Endothelial cell of umbilical vein (primary cell): ENCODE measurements at regions of chr15 and their contacts with region 1.

Region 1: GRCh38 chr15:79028411-79028964 is 62.1 kb downstream of the RASGRF1 start:
- DNase-seq: peak; percentile 31
- H3K4me3 ChIP-seq: no peak overlapping the region
- H3K27ac ChIP-seq: no peak overlapping the region
- H3K4me1 ChIP-seq: no peaks in the 10 kb centered on the region
- H3K27me3 ChIP-seq: no peaks in the 10 kb centered on the region
- CTCF ChIP-seq: peak; percentile 78 to 80
- POLR2A ChIP-seq: no peak

Region 2: DNA sequence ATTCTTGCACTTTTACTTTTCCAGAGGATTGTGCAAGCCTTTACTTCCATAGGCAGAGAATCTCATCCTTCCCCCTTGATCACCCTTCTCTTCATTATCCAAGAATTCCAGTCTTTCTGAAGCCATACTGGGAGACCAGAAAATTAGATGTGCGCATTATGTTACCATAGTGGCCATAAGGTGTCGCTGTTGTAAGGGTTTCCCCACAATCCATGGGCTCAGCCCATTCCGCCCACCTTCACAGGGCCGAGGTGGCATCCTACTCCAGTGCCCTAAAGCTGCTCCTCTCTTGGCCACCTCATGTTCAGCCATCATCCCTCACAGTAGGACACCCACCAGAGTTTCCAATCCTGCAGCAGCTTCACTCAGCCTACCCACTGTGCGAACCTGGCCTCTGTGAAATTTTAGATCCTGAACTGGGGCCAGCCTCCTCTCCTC is 118.7 kb before region 1 on chr15:
- CTCF ChIA-PET with region 1: interaction called, 13 read pairs
- POLR2A ChIA-PET with region 1: no interaction called
- dilution Hi-C with region 1: no loop called
- intact Hi-C with region 1: no loop called
- DNase-seq: peak; percentile 52
- H3K4me3 ChIP-seq: no peak overlapping the region
- H3K27ac ChIP-seq: no peak overlapping the region
- H3K4me1 ChIP-seq: no peaks in the 10 kb centered on the region
- H3K27me3 ChIP-seq: no peaks in the 10 kb centered on the region
- CTCF ChIP-seq: peak; percentile 61 to 65
- POLR2A ChIP-seq: no peak

Region 3: DNA sequence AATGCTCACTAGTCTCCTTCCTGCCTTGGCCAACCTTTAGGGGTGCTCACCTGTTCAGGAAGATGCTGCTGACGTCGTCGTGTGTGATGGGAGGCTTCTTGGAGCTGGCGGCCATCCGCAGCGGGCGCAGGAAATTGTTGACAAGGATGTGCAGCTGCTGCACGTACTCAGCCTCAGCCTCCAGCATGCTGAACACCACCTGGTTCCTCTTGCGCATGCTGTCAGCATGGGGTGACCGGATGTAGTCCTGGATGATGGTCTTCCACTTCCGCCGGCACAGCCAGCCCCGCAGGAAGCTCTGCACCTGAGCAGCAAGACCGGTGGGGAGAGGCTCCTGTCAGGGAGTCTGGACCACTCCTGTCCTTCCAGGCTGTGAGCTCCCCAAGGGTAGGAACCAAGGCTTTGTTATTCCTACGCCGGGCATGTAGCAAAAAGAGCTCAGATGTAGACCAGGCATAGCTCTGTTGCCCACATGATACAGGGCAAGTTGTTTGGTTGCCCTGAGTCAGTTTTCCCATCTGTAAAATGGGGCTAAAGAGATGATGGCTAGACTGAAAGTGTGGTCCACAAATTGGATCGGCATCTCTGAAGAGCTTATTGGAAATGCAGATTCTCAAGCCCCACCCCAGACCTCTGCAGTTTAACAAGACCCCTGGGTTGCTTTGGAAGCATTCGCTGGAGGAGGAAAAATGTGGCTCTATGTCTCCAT is 18.4 kb after region 1 on chr15:
- CTCF ChIA-PET with region 1: interaction called, 13 read pairs
- POLR2A ChIA-PET with region 1: no interaction called
- dilution Hi-C with region 1: no loop called
- intact Hi-C with region 1: no loop called
- DNase-seq: no peak
- H3K4me3 ChIP-seq: no peak overlapping the region
- H3K27ac ChIP-seq: no peak overlapping the region
- H3K4me1 ChIP-seq: no peaks in the 10 kb centered on the region
- H3K27me3 ChIP-seq: no peaks in the 10 kb centered on the region
- CTCF ChIP-seq: no peak
- POLR2A ChIP-seq: no peak

Region 4: DNA sequence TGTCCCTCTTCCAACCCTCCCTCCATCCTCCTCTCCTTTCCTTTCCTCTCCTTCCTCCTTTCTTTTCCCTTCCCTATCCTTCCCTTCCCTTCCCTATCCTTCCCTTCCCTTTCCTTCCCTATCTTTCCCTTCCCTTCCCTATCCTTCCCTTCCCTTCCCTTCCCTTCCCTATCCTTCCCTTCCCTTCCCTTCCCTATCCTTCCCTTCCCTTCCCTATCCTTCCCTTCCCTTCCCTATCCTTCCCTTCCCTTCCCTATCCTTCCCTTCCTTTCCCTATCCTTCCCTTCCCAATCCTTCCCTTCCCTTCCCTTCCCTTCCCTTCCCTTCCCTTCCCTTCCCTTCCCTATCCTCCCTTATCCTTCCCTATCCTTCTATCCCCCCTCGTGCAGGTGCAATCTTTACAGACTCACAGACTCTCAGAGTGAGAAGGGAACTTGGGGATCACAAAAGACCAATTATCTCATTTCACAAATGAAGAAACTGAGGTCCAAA is 30.6 kb after region 1 on chr15:
- CTCF ChIA-PET with region 1: no interaction called
- POLR2A ChIA-PET with region 1: no interaction called
- dilution Hi-C with region 1: no loop called
- intact Hi-C with region 1: no loop called
- DNase-seq: no peak
- H3K4me3 ChIP-seq: no peak overlapping the region
- H3K27ac ChIP-seq: no peak overlapping the region
- H3K4me1 ChIP-seq: no peaks in the 10 kb centered on the region
- H3K27me3 ChIP-seq: no peaks in the 10 kb centered on the region
- CTCF ChIP-seq: no peak
- POLR2A ChIP-seq: no peak

Region 5: DNA sequence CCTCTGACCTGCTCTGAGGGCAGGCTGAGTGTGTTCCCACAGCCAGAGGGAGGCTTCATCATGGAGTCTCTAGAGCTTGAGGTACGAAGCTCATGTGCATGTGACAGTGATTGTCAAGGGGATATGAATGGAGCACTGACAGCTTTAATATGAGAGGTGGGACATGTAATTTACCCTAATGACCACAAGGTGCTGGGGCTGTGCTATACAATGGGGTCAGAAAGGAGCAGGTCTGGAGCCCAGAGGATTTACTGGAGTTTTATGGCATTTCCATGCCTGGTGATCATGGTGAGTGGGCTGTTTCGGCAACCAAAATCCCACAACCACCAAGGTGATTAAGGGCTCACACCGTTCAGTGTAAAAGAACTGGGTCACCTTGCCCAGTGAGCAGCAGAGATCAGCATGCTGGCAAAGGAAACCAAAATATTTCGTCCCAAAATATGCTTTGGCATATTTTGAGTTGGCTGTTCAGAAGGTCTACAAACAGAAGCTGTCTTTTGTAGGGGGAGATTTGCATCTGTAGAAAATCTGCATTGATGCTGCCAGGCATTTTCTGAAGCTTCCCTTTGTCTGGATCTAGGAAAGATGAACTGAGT is 102.1 kb after region 1 on chr15:
- CTCF ChIA-PET with region 1: no interaction called
- POLR2A ChIA-PET with region 1: no interaction called
- dilution Hi-C with region 1: no loop called
- intact Hi-C with region 1: no loop called
- DNase-seq: no peak
- H3K4me3 ChIP-seq: no peak overlapping the region
- H3K27ac ChIP-seq: no peak overlapping the region
- H3K4me1 ChIP-seq: no peaks in the 10 kb centered on the region
- H3K27me3 ChIP-seq: no peaks in the 10 kb centered on the region
- CTCF ChIP-seq: no peak
- POLR2A ChIP-seq: no peak